ENCODE measurements at regions of chr19 and their contacts with region 1.

Region 1: DNA sequence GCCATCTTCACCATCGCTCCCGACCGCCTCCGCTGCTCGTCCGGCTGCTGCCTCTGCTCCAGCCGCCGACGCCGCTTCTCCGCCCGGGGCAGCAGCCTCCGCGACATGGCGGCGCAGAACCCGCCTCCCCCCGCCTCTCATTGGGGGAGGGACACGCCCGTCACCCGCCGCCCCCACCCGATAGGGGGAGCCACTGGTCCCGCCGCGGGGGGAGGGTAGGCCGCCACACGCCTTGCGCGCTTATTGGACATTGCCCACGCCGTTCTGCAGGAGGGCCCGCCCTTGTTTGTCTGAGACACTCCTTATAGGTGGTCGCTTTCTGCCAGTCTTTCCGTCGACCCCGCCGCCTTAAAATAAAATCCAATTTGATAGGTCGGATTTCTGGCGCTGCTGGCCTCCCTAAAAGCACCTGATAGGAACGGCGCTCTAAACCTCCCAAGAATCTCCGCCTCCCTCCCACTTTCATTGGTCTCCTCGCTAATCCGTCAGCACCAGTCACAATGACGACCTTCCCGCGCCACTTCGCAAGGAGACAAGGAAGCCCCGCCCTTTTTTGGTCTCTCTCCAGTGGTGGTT is at the start of gene HNRNPL:
- H3K4me3 ChIP-seq: peak within 1 kb of the TSS; percentile 57
- H3K27ac ChIP-seq: peak within 1 kb of the TSS; percentile 100
- H3K4me1 ChIP-seq: peaks cover 32% of the 10 kb centered on the region
- CTCF ChIP-seq: peak; percentile 100

Region 2: DNA sequence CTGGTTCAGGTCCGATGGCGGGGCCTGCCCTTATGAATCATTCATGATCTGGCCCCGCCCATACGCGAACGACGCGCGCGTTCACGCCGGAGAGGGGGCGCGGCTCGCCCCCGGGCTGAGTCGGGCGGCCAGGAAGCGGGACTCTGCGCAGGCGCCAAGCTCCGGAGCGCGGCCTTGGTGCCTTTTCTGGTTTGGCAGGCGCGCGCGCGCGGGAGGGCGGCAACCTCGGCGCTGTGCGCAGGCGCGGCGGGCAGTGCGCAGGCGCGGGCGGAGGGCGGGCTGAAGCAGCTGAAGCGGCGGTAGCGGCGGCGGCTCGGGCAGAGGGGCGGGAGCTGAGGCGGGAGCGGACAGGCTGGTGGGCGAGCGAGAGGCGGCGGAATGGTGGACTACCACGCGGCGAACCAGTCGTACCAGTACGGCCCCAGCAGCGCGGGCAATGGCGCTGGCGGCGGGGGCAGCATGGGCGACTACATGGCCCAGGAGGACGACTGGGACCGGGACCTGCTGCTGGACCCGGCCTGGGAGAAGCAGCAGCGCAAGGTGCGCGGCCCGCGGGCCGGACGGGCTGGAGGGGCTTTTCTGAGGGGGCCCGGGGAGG is 202.5 kb before region 1 on chr19 and contains the start of gene ACTN4:
- CTCF ChIA-PET with region 1: no interaction called
- POLR2A ChIA-PET with region 1: interaction called, 16 read pairs
- H3K4me3 ChIP-seq: peak within 1 kb of the TSS; percentile 84
- H3K27ac ChIP-seq: peak within 1 kb of the TSS; percentile 96
- H3K4me1 ChIP-seq: peaks cover 37% of the 10 kb centered on the region
- CTCF ChIP-seq: peak; percentile 52; the same call in 1 of the 2 replicates

Region 3: GRCh38 chr19:38734426-38735256 is 115.3 kb before region 1 on chr19:
- CTCF ChIA-PET with region 1: interaction called, 4 read pairs
- POLR2A ChIA-PET with region 1: interaction called, 11 read pairs
- H3K4me3 ChIP-seq: no peak overlapping the region
- H3K27ac ChIP-seq: peak overlapping the region; percentile 55; the same call in 1 of the 2 replicates
- H3K4me1 ChIP-seq: peaks cover 5% of the 10 kb centered on the region
- CTCF ChIP-seq: no peak

Region 4: GRCh38 chr19:38831142-38831605 is 18.8 kb before region 1 on chr19:
- CTCF ChIA-PET with region 1: interaction called, 4 read pairs
- POLR2A ChIA-PET with region 1: interaction called, 159 read pairs
- H3K4me3 ChIP-seq: peak overlapping the region; percentile 59
- H3K27ac ChIP-seq: peak overlapping the region; percentile 82; the same call in 1 of the 2 replicates
- H3K4me1 ChIP-seq: peaks cover 19% of the 10 kb centered on the region
- CTCF ChIP-seq: no peak

Region 5: GRCh38 chr19:38862321-38863059 is 12.5 kb after region 1 on chr19:
- CTCF ChIA-PET with region 1: interaction called, 8 read pairs
- POLR2A ChIA-PET with region 1: interaction called, 35 read pairs
- H3K4me3 ChIP-seq: no peak overlapping the region
- H3K27ac ChIP-seq: peak overlapping the region; percentile 91
- H3K4me1 ChIP-seq: peaks cover 18% of the 10 kb centered on the region
- CTCF ChIP-seq: no peak

Region 6: DNA sequence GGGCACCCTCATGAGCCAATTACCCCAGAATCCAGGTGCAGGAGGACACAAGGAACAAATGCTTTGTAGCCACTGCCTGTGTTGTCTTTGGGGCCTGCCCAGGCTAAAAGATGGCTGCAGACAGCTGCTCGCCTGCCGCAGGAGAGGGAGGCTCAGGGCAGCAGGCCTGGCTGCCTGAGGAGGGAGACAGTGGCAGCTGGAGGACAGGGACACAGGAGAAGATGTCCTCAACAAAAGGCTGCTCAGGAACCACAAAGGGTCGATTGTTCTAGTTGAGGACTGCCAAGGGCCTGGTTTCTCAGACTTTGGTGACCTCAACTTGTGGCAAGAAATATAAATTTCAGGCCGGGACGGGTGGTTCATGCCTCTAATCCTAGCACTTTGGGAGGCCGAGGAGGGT is 41.8 kb after region 1 on chr19:
- CTCF ChIA-PET with region 1: interaction called, 33 read pairs
- POLR2A ChIA-PET with region 1: interaction called, 9 read pairs
- H3K4me3 ChIP-seq: no peak overlapping the region
- H3K27ac ChIP-seq: no peak overlapping the region
- H3K4me1 ChIP-seq: peaks cover 3% of the 10 kb centered on the region; the same call in 1 of the 2 replicates
- CTCF ChIP-seq: no peak